ENCODE measurements at regions of chr14 and their contacts with region 1.

Region 1: DNA sequence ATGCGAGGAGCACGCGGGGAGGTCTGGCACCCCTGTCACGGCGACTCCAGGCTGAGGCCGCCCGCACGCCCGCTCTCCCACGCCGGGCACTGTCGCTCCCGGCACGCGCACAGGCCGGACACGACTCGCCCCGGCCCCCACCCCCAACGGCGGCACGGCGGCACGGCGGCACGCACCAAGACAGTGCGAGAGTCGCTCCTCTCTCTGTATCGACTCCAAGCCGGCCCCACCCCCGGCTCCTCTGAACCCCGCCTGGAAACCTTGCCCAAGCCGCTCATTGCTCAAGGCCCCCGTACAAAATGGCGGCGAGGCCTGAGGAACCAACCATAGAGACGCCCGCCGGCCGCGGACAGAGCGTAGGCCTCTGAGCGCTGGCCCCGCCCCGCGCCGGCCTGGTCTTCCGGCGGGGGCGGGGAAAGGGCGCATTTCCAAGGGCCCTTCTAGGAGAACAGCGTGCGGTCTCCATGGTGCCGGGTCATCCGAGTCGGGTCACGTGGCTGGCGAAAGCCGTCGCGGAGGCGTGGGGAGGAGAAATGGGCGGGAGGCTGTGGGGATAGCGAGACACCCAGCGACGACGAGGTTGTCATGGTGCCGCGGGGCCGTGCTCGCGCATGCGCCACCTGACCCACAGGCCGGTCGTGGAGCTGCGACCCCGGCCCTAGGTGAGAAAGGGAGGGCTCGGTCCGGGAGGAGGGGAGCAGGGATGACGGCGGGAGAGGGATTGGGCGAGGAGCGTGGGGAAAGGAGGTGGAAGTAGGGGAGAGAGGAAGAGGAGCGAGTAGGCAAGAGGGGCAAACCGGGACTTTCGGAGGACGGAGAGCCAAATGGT is at the start of gene CIPC:
- DNase-seq: peak; percentile 99
- H3K4me3 ChIP-seq: peak within 1 kb of the TSS; percentile 82
- H3K27ac ChIP-seq: peak within 1 kb of the TSS; percentile 76
- H3K4me1 ChIP-seq: peaks cover 49% of the 10 kb centered on the region
- CTCF ChIP-seq: no peak
- total RNA-seq, gene CIPC: 31.7 and 43.4 TPM in 2 replicates

Region 2: GRCh38 chr14:76720382-76720813 is 377.5 kb before region 1 on chr14:
- CTCF ChIA-PET with region 1: no interaction called
- POLR2A ChIA-PET with region 1: no interaction called
- intact Hi-C with region 1: loop called (anchors 10 kb)
- DNase-seq: peak; percentile 61
- H3K4me3 ChIP-seq: no peak overlapping the region
- H3K27ac ChIP-seq: peak overlapping the region; percentile 64
- H3K4me1 ChIP-seq: peaks cover 36% of the 10 kb centered on the region
- CTCF ChIP-seq: no peak

Region 3: DNA sequence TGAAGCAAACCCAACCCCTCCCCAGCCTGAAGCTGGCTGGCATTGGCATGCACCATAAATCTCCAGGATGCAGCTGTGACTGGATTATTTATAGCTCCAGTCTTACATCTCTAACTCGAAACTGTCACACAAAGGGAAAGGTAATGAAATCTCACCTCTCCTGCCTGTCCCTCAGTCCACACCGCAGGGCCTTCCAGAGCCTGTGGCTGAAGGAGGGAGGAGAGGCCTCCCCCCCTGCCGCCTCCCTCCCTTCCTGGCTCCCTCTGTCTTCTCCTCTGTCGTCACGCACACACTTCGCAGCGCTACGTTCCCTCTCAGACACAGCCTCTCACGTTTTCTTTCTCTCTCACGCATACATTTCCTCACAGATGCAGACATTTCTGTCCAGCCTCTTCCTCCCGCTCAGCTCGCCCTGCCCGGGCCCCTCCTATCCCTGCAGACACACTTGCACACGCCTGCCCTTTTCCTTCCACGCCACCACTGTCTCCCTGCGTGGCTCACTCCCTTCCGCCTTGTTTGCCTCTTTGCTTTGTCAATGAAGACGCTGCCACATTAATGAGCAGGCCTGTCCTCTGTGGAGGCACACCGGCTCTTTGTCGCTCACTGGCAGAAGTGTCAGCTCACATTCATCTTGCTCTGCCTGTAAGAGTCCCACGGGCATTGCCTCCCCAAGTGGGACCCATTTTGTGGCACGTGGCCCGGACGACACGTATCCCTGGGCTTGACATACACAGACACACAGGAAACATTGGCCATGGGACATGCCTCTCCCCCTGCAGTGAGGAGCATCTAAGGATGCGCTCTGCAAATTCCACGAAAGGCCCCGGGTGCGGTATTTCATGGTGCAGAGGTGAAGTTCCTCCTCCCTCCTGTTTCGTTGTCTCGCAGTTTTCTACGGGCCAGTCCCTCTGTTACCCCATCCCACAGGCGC is 97.3 kb before region 1 on chr14:
- CTCF ChIA-PET with region 1: no interaction called
- POLR2A ChIA-PET with region 1: no interaction called
- intact Hi-C with region 1: no loop called
- DNase-seq: peak; percentile 76
- H3K4me3 ChIP-seq: peak overlapping the region; percentile 42
- H3K27ac ChIP-seq: peak overlapping the region; percentile 51
- H3K4me1 ChIP-seq: peaks cover 41% of the 10 kb centered on the region
- CTCF ChIP-seq: no peak

Region 4: DNA sequence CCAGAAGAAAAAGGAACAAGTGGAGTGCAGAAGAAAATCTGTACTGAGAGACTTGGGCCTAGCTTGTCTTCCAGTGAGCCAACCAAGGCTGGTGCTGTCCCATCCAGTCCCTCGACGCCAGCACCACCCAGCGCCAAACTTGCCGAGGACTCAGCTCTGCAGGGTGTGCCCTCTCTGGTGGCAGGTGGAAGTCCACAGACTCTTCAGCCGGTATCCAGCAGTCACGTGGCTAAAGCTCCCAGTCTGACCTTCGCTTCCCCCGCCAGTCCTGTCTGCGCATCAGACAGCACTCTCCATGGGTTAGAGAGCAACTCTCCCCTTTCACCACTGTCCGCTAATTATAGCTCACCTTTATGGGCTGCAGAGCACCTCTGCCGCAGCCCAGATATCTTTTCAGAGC is 15.7 kb after region 1 on chr14:
- CTCF ChIA-PET with region 1: no interaction called
- POLR2A ChIA-PET with region 1: interaction called, 10 read pairs
- intact Hi-C with region 1: no loop called
- DNase-seq: no peak
- H3K4me3 ChIP-seq: no peak overlapping the region
- H3K27ac ChIP-seq: no peak overlapping the region
- H3K4me1 ChIP-seq: no peaks in the 10 kb centered on the region
- CTCF ChIP-seq: no peak

Region 5: DNA sequence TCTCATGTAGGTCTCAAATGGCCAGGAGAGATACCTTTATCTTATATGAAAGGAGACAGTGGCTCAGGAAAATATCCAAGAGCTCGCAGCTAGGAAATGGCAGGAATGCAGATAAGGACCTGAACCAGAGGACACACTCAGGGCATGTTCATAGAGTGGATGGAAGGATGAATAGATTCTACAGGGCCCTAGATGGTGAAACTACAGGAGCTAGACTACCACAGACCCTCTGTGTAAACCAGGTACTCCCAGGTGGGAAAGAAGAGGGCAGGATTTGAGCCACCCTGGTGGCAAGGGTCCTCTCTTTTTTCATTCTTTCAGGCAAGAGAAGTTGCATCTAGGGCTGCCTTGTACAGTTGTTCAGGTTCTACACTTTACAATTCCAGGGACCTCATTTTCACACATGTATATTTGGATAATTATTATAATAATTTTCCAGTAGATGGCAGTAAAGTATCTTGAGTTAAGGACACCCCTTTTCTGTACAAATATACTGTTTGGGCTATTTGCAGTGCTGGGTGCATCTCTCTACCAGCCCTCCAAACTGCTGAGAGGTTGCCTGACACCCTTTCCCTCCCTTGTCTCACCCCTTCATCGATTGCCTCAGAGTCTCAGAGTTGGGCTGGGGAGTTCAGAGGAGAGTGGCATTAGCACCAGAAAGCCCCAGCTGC is 54.1 kb after region 1 on chr14:
- CTCF ChIA-PET with region 1: interaction called, 4 read pairs
- POLR2A ChIA-PET with region 1: interaction called, 3 read pairs
- intact Hi-C with region 1: loop called (anchors 5 kb)
- DNase-seq: peak; percentile 65
- H3K4me3 ChIP-seq: no peak overlapping the region
- H3K27ac ChIP-seq: no peak overlapping the region
- H3K4me1 ChIP-seq: peaks cover 7% of the 10 kb centered on the region
- CTCF ChIP-seq: peak; percentile 67

Region 6: DNA sequence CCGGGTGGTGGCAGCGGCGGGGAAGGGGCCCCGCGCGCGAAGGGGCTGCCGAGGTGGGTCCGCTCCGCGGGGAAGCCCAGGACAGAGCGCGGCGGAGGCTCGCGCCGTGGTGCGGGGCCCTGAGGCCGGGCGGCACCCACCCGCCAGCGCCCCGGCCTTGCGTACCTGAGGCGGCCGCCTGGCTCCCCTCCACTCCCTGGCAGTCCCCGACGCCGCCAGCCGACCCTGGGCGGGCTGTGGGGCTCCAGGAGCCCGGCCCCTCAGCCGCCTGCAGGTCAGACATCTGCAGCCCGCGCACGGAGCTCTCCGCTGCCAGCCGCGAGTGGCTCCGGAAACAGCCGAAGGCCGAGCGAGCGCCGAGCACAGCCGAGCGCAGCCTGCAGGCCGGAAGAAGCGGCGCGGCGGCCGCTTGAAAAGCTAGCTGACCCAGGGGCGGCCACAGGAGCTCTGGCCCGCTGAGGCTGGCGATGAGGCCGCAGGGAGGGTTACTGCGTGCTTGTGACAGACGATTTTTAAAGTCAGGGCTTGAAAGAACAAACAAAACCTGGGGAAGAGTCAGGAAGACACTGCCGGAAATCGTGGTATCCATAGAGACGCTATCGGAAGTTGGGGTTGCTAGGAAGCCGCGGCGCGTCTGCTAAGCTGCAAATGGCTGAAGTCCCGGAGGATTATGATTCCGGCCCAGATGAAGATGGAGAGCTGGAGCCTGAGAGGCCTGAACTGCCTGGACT is 279.0 kb after region 1 on chr14 and contains the starts of genes SAMD15 and TMED8:
- CTCF ChIA-PET with region 1: no interaction called
- POLR2A ChIA-PET with region 1: no interaction called
- intact Hi-C with region 1: loop called (anchors 2 kb)
- DNase-seq: peak; percentile 87
- H3K4me3 ChIP-seq: peak within 1 kb of the TSS; percentile 87
- H3K27ac ChIP-seq: peak within 1 kb of the TSS; percentile 96
- H3K4me1 ChIP-seq: peaks cover 32% of the 10 kb centered on the region
- CTCF ChIP-seq: peak; percentile 31; the same call in 1 of the 2 replicates
- total RNA-seq, gene SAMD15: 1.1 and 1.6 TPM in 2 replicates
- total RNA-seq, gene TMED8: 19.5 and 21.9 TPM in 2 replicates